ENCODE measurements at regions of chr17 and their contacts with region 1.

Region 1: DNA sequence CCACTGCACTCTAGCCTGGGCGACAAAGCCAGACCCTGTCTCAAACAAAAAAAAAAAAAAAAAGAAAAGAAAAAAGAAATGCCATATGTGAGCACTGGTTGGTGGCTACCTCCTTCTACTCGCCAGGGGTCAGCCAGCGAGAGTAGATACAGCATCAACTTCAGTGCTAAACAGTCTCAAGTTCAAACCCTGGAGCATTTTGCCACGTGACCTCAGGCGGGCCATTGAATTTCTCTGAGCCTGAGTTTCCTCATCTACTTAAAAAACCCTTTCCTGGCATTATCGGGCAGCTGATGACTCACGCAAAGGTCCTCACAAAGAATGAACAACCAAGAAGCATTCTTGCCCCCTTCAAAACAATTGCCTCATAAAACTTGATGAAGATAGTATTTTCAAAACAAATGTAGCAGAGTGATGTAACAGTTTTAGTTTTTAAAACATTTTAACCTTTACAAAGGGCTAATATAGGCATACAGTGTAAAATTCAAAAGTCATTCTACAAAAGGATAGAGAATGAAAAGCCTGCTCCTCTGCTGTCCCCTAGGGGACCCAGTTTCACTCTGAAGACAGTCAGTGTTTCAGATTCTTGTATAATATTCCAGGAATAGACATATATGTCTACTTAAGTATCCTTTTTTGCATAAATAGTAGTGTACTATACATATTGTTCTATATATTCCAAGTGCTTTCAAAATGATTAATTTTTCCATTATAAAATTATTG is 28.4 kb downstream of the DNAH2 start:
- DNase-seq: peak; percentile 95
- H3K4me3 Mint-ChIP-seq: no peak overlapping the region
- H3K27ac Mint-ChIP-seq: no peak overlapping the region
- H3K4me1 Mint-ChIP-seq: peaks cover 11% of the 10 kb centered on the region
- H3K27me3 Mint-ChIP-seq: peaks cover 3% of the 10 kb centered on the region
- CTCF ChIP-seq: no peak

Region 2: GRCh38 chr17:7729816-7730215 is 16.1 kb before region 1 on chr17:
- CTCF ChIA-PET with region 1: interaction called, 11 read pairs
- POLR2A ChIA-PET with region 1: interaction called, 3 read pairs
- intact Hi-C with region 1: no loop called
- DNase-seq: no peak
- H3K4me3 Mint-ChIP-seq: no peak overlapping the region
- H3K27ac Mint-ChIP-seq: no peak overlapping the region
- H3K4me1 Mint-ChIP-seq: peaks cover 5% of the 10 kb centered on the region
- H3K27me3 Mint-ChIP-seq: no peaks in the 10 kb centered on the region
- CTCF ChIP-seq: no peak

Region 3: GRCh38 chr17:7767405-7768021 is 21.6 kb after region 1 on chr17:
- CTCF ChIA-PET with region 1: no interaction called
- POLR2A ChIA-PET with region 1: no interaction called
- intact Hi-C with region 1: no loop called
- DNase-seq: no peak
- H3K4me3 Mint-ChIP-seq: no peak overlapping the region
- H3K27ac Mint-ChIP-seq: peak overlapping the region; percentile 7
- H3K4me1 Mint-ChIP-seq: no peaks in the 10 kb centered on the region
- H3K27me3 Mint-ChIP-seq: peaks cover 11% of the 10 kb centered on the region
- CTCF ChIP-seq: no peak

Region 4: GRCh38 chr17:7782237-7782636 is 36.3 kb after region 1 on chr17:
- CTCF ChIA-PET with region 1: interaction called, 32 read pairs
- POLR2A ChIA-PET with region 1: interaction called, 3 read pairs
- intact Hi-C with region 1: loop called (anchors 1 kb)
- DNase-seq: peak; percentile 32
- H3K4me3 Mint-ChIP-seq: no peak overlapping the region
- H3K27ac Mint-ChIP-seq: no peak overlapping the region
- H3K4me1 Mint-ChIP-seq: peaks cover 6% of the 10 kb centered on the region
- H3K27me3 Mint-ChIP-seq: no peaks in the 10 kb centered on the region
- CTCF ChIP-seq: peak; percentile 23

Region 5: DNA sequence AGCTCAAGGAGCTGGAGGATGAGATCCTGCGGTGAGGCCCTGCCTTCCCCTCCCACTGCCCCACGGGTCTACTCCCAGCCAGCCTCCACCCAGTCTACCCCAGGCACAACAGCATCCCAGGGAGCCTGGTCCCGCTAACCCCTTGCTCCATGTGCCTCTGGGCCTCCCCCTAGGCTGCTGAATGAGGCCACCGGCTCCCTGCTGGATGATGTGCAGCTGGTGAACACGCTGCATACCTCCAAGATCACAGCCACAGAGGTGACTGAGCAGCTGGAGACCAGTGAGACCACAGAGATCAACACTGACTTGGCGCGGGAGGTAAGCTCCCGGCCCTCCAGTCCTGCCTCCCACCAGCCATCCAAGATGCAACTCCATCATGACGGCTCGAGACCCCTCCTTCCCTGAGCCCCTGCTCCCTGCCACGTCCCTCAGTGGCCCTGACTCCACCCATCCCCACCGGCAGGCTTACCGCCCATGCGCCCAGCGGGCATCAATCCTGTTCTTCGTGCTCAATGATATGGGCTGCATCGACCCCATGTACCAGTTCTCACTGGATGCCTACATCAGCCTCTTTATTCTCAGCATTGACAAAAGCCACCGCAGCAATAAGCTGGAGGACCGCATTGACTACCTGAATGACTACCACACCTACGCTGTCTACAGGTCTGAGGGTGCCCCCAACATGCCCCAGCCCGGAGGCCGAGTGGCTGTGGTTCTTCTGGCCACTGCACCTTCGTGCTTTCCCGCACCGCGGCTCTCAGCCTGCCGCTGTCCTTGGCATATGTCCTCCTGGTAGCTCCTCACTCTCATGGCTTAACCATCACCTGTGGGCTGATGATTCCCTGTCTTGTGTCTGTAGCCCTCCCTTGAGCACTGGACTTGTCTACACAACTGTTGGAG is 73.1 kb after region 1 on chr17:
- CTCF ChIA-PET with region 1: interaction called, 26 read pairs
- POLR2A ChIA-PET with region 1: interaction called, 5 read pairs
- intact Hi-C with region 1: loop called (anchors 1 kb)
- DNase-seq: no peak
- H3K4me3 Mint-ChIP-seq: no peak overlapping the region
- H3K27ac Mint-ChIP-seq: no peak overlapping the region
- H3K4me1 Mint-ChIP-seq: peaks cover 5% of the 10 kb centered on the region
- H3K27me3 Mint-ChIP-seq: no peaks in the 10 kb centered on the region
- CTCF ChIP-seq: no peak

Region 6: DNA sequence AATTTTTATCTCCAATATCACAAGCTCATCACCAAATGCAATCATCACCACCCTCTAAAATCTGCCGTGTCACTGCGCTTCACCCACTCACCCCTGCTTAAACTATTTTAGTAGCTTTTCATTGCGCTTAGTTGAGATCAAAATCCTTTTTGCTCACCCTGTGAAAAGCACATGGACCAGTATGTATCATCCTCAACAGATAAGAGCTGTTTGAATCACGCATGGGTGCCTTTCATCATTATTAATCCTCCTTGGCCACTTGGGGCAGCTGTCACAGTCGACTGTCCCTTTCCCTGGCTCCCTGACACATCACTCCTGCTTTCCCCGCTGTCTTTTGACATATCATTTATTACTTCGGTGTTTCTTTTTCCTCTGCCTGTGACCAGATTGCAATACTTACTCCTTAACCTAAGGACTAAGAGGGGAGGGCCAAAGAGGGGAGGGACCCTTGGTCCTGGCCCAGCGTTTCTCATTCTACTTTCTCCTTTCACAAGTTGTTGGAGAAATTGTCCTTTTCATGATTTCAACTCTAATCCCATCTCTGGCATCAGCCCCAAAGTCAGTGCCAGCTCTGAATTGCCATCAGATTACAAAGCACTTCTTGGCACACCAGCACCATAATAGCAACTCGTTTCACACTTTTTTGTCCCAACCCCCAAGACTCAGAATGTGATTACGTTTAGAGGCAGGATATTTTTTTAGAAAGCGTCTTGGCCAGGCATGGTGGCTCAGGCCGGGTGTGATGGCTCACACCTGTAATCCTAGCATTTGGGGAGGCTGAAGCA is 79.5 kb after region 1 on chr17:
- CTCF ChIA-PET with region 1: interaction called, 26 read pairs
- POLR2A ChIA-PET with region 1: interaction called, 5 read pairs
- intact Hi-C with region 1: loop called (anchors 1 kb)
- DNase-seq: no peak
- H3K4me3 Mint-ChIP-seq: no peak overlapping the region
- H3K27ac Mint-ChIP-seq: no peak overlapping the region
- H3K4me1 Mint-ChIP-seq: peaks cover 22% of the 10 kb centered on the region
- H3K27me3 Mint-ChIP-seq: peaks cover 22% of the 10 kb centered on the region
- CTCF ChIP-seq: no peak

Region 7: DNA sequence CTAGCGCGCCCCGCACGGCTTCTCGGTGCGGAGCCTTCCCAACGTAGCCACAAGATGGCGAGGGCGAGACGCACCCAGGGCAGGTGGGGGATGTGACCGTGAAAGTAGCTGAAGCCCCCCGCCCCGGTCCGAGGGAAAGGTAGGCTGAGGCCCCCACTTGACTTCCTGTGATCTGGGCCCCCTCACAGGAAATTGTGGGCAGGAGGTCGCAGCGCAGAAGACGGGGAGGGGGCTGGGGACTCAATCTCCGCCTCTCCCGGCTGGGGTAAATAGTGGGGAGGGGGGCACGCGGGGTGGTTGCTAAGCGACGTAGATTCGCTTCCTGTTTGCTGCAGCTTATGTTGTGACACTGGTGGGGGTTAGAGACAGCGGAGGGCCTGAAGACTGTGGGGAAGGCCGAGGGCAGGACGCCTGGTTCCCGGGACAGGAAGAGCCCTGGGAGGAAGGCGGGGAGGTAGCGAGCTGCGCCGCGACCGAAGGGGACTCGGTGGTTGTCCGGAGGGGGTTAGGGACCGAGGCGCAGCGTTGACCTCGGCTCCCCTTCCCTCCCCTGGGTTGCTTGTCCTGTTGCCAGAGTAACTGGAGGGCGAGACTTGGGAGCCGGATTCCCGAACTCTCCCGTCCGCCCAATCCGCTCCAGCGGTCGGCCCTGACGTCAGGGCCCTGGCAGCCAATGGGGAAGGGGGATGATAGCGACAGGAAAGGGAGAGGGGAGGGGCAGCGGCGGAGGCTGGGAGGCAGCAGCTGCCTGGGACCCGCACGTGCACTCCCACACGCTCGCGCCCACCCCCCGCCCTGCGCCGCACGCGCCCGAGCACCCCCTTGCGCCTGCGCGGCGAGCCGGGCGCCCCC is 89.3 kb after region 1 on chr17:
- CTCF ChIA-PET with region 1: interaction called, 36 read pairs
- POLR2A ChIA-PET with region 1: interaction called, 11 read pairs
- intact Hi-C with region 1: no loop called
- DNase-seq: peak; percentile 97
- H3K4me3 Mint-ChIP-seq: peak overlapping the region; percentile 89
- H3K27ac Mint-ChIP-seq: peak overlapping the region; percentile 99
- H3K4me1 Mint-ChIP-seq: peaks cover 43% of the 10 kb centered on the region
- H3K27me3 Mint-ChIP-seq: no peaks in the 10 kb centered on the region
- CTCF ChIP-seq: peak; percentile 73

Region 8: GRCh38 chr17:7844292-7845154 is 98.6 kb after region 1 on chr17:
- CTCF ChIA-PET with region 1: interaction called, 32 read pairs
- POLR2A ChIA-PET with region 1: interaction called, 14 read pairs
- intact Hi-C with region 1: no loop called
- DNase-seq: peak; percentile 96
- H3K4me3 Mint-ChIP-seq: peak overlapping the region; percentile 79
- H3K27ac Mint-ChIP-seq: peak overlapping the region; percentile 87
- H3K4me1 Mint-ChIP-seq: peaks cover 27% of the 10 kb centered on the region
- H3K27me3 Mint-ChIP-seq: no peaks in the 10 kb centered on the region
- CTCF ChIP-seq: no peak